Activated T-helper 2 cell treated with anti-CD3 and anti-CD28 coated beads, Interferon-gamma antibody, Interleukin-2, Interleukin-4, amounts not matched to agents 10 μg/mL and 5 μg/mL and 100 μg/mL, durations not matched to agents 14 hours and 24 hours and 36 hours (primary cell): ENCODE measurements at regions of chr3 and their contacts with region 1.

Region 1: DNA sequence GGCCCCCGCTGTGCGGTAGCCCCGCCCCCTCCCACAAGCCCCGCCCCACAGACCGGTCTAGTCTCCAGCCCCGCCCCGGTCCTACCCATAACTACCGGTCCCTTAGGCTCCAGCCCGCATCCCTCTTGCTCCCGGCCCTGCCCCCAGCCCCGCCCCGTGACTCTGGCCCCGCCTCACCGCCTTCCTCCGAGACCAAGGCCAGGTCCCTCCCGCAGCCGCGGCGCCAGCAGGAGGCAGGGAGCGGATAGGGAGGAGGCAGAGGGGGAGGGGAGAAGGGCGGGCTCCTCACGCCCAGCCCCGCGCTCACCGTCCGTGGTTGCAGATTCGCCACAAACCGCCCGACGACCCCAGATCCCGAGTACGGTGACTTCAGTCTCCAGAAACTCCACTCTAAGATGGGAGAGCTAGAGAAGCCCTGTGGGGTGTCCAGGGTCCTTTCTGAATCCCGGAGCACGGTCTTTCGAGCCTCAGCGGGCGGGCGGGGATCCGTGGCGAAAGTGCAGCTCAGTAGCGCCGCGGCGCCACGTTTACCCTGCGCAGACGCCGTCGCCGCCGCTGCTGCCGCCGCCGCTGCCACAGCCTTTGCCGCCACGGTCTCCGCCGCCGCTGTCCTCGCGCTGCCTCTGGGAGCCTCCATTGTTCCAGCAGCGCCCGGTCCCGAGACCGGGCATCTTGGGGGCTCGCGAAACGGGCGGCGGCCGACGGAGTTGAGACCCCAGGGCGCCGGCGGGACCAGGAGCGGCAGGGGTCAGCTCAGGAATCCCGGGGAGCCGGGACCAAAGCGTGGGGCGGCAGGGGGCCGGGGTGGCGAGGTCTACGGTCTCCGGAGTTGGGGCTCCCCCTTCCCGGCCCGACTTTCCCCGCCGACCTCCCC is at the start of gene BRPF1:
- DNase-seq: peak; percentile 96
- H3K4me3 Mint-ChIP-seq: peak within 1 kb of the TSS; percentile 96
- H3K27ac Mint-ChIP-seq: peak within 1 kb of the TSS; percentile 90
- H3K4me1 Mint-ChIP-seq: peaks cover 57% of the 10 kb centered on the region
- H3K27me3 Mint-ChIP-seq: no peaks in the 10 kb centered on the region
- total RNA-seq, gene BRPF1: 34.2 and 35.8 TPM in 2 replicates

Region 2: DNA sequence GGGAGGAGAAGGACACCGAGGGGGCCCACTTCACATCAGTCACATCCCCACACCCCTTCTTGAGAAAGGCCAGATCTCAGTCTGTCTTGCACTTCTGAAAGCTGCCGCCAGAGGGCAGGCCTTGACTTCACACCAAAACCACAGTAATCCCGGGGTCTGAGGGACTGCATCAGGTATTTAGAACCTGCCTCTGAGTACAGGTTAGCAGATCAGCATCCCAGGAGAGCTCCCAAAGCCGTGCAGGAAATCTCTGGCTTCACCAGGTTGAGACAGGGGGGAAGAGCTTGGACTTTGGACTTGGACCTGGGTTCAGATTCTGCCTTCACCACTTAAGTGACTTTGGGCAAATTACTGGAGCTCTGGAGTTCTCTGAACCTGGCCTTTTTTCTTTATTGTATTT is 228.2 kb before region 1 on chr3:
- intact Hi-C with region 1: loop called (anchors 5 kb)
- DNase-seq: peak; percentile 60
- H3K4me3 Mint-ChIP-seq: no peak overlapping the region
- H3K27ac Mint-ChIP-seq: no peak overlapping the region
- H3K4me1 Mint-ChIP-seq: peaks cover 2% of the 10 kb centered on the region
- H3K27me3 Mint-ChIP-seq: peaks cover 22% of the 10 kb centered on the region

Region 3: DNA sequence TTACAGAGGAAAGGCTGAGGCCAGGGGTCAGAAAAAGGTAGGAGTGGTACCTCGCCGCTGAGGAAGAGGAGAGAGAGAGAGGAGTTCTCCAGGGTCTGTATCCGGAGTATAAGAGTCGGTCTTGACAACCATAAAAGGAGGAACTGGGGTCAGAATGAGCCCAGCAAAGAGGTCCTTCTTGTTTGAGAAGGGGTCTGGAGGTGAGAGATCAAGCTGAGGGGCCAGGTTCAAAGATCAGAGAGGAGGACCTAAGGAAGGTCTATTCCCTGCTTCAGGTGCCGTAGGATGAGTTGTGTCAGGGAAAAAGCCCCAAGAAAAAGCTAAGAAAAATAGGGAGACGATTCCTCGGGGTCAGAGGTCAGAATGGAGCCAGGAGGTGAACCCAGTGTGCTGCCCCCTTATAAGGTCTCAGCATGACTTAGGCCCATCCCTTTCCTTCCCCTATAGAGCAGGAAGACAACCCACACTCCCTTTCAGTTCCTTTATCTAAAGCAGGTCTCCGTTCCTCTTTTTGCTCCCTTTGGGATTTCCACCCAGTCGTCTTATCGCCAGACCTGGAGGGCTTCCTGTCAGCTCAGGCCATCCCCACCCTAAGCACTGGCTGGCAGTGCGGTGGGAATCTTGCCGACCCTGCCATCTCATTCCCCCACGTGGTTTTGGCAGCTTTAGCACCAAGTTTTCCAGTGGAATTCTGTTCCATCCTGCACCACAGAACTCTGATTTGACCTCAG is 81.5 kb before region 1 on chr3:
- intact Hi-C with region 1: loop called (anchors 1 kb)
- DNase-seq: no peak
- H3K4me3 Mint-ChIP-seq: peak overlapping the region; percentile 93
- H3K27ac Mint-ChIP-seq: peak overlapping the region; percentile 84
- H3K4me1 Mint-ChIP-seq: peaks cover 11% of the 10 kb centered on the region
- H3K27me3 Mint-ChIP-seq: no peaks in the 10 kb centered on the region

Region 4: GRCh38 chr3:9749645-9750555 is 18.5 kb after region 1 on chr3 and contains the start of gene OGG1:
- intact Hi-C with region 1: loop called (anchors 1 kb)
- DNase-seq: peak; percentile 97
- H3K4me3 Mint-ChIP-seq: peak within 1 kb of the TSS; percentile 95
- H3K27ac Mint-ChIP-seq: peak within 1 kb of the TSS; percentile 94
- H3K4me1 Mint-ChIP-seq: peaks cover 28% of the 10 kb centered on the region
- H3K27me3 Mint-ChIP-seq: no peaks in the 10 kb centered on the region
- total RNA-seq, gene OGG1: 33.0 and 38.4 TPM in 2 replicates

Region 5: GRCh38 chr3:9779721-9780457 is 48.4 kb after region 1 on chr3:
- intact Hi-C with region 1: loop called (anchors 2 kb)
- DNase-seq: peak; percentile 28
- H3K4me3 Mint-ChIP-seq: peak overlapping the region; percentile 62
- H3K27ac Mint-ChIP-seq: peak overlapping the region; percentile 98
- H3K4me1 Mint-ChIP-seq: peaks cover 58% of the 10 kb centered on the region
- H3K27me3 Mint-ChIP-seq: no peaks in the 10 kb centered on the region

Region 6: GRCh38 chr3:9890249-9891071 is 159.0 kb after region 1 on chr3 and contains the start of gene JAGN1:
- intact Hi-C with region 1: loop called (anchors 1 kb)
- DNase-seq: peak; percentile 83
- H3K4me3 Mint-ChIP-seq: peak within 1 kb of the TSS; percentile 97
- H3K27ac Mint-ChIP-seq: peak within 1 kb of the TSS; percentile 99
- H3K4me1 Mint-ChIP-seq: peaks cover 31% of the 10 kb centered on the region
- H3K27me3 Mint-ChIP-seq: no peaks in the 10 kb centered on the region
- total RNA-seq, gene JAGN1: 31.7 and 33.3 TPM in 2 replicates

Region 7: GRCh38 chr3:10322352-10322710 is 590.9 kb after region 1 on chr3:
- intact Hi-C with region 1: loop called (anchors 5 kb)
- DNase-seq: no peak
- H3K4me3 Mint-ChIP-seq: no peak overlapping the region
- H3K27ac Mint-ChIP-seq: no peak overlapping the region
- H3K4me1 Mint-ChIP-seq: peaks cover 14% of the 10 kb centered on the region
- H3K27me3 Mint-ChIP-seq: peaks cover 15% of the 10 kb centered on the region